Pancreas (tissue), 10 donors: ENCODE measurements at regions of chr14 and their contacts with region 1.

Region 1: GRCh38 chr14:51776102-51776894 is 84.1 kb upstream of the GNG2 start:
- DNase-seq: peak in 2 of 6 donors; percentile 28 to 29
- ATAC-seq: peak in 3 of 4 donors; percentile 76 to 80 (median 77)
- H3K4me3 ChIP-seq: no peak overlapping the region
- H3K27ac ChIP-seq: no peak overlapping the region
- H3K4me1 ChIP-seq: no peaks in the 10 kb centered on the region
- H3K27me3 ChIP-seq: peaks cover 0 to 5% (median 0%) of the 10 kb centered on the region in 4 donors
- CTCF ChIP-seq: peak in 3 of 4 donors; percentile 17 to 27 (median 21)

Region 2: DNA sequence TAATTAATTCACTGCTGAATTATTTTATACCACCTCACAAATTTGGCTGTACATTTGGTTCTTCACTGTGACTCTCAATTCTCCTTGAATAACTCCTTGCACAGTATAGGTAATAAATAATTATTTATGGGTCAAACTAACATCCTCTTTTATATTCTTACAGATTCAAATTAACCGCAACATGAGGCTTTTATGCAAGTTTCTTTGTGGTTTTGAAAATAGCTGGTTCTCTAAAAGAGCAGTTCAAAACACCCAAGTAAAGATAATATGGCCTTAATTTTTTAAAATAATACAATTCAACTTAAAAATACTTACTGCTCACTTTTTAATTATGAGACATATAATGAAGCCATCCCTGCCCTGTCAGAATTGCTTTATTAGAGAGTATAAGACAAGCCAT is 668.5 kb before region 1 on chr14:
- intact Hi-C with region 1: no loop called
- DNase-seq: no peak
- ATAC-seq: no peak
- H3K4me3 ChIP-seq: no peak overlapping the region
- H3K27ac ChIP-seq: no peak overlapping the region
- H3K4me1 ChIP-seq: no peaks in the 10 kb centered on the region
- H3K27me3 ChIP-seq: no peaks in the 10 kb centered on the region
- CTCF ChIP-seq: no peak

Region 3: DNA sequence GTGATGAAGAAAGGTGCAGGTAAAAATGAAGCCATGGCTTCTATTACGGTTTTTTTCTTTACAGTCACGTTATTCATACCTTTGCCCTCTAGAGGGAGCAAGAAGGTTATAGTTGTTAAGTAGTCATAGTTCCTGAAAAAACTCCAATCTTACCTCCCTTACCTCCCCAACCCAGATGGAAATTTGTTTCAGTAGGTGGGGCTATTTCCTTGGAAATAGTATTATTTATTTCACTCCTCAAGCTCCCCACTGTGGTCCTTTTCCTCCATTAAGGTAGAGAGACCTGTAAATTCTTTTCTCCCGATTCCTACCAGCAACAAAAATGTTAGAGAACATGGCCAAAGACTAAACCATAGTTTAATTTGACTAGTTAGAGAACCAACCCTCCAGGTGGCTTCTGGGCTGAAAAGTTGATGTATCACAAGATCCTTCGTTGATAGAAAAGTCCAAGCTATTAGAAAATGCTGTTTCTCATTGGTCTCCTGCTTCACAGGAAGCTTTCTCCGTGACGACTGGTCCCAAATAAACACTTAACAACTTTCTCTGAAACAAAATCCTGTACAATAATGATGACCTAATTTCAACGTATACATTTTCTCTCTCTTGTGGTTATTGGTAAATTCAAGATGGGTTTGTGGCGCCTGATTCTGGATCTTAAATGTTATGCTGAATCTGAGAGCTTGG is 492.8 kb before region 1 on chr14:
- intact Hi-C with region 1: loop called in 2 of 3 experiments (anchors 5 kb)
- DNase-seq: no peak
- ATAC-seq: peak; percentile 68 to 98 (median 94)
- H3K4me3 ChIP-seq: no peak overlapping the region
- H3K27ac ChIP-seq: no peak overlapping the region
- H3K4me1 ChIP-seq: no peaks in the 10 kb centered on the region
- H3K27me3 ChIP-seq: no peaks in the 10 kb centered on the region
- CTCF ChIP-seq: peak; percentile 38 to 77 (median 64)

Region 4: GRCh38 chr14:51369814-51370213 is 406.5 kb before region 1 on chr14:
- intact Hi-C with region 1: loop called in 1 of 3 experiments (anchors 10 kb)
- DNase-seq: peak in 1 of 6 donors; percentile 15
- ATAC-seq: peak in 3 of 4 donors; percentile 57 to 79 (median 65)
- H3K4me3 ChIP-seq: no peak overlapping the region
- H3K27ac ChIP-seq: no peak overlapping the region
- H3K4me1 ChIP-seq: no peaks in the 10 kb centered on the region
- H3K27me3 ChIP-seq: no peaks in the 10 kb centered on the region
- CTCF ChIP-seq: peak in 2 of 4 donors; percentile 25 to 42

Region 5: DNA sequence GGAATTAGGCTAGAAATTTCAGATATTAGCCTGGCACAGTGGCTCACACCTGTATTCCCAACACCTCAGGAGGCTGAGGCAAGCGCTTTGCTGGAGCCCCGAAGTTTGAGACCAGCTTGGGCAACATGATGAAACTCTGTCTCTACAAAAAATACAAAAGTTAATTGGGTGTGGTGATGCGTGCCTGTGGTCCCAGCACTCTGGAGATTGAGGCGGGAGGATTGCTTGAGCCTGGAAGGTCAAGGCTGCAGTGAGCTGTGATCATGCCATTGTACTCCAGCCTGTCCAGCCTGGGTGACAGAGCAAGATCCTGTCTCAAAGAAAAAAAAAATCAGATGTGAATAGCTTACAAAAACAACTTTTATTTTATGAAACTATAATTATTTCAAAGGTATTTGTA is 109.5 kb before region 1 on chr14:
- intact Hi-C with region 1: no loop called
- DNase-seq: no peak
- ATAC-seq: no peak
- H3K4me3 ChIP-seq: no peak overlapping the region
- H3K27ac ChIP-seq: no peak overlapping the region
- H3K4me1 ChIP-seq: no peaks in the 10 kb centered on the region
- H3K27me3 ChIP-seq: no peaks in the 10 kb centered on the region
- CTCF ChIP-seq: no peak

Region 6: GRCh38 chr14:52124791-52125661 is 348.7 kb after region 1 on chr14:
- intact Hi-C with region 1: no loop called
- DNase-seq: no peak
- ATAC-seq: peak in 2 of 4 donors; percentile 34 to 63
- H3K4me3 ChIP-seq: no peak overlapping the region
- H3K27ac ChIP-seq: no peak overlapping the region
- H3K4me1 ChIP-seq: no peaks in the 10 kb centered on the region
- H3K27me3 ChIP-seq: peaks cover 0 to 3% (median 0%) of the 10 kb centered on the region in 4 donors
- CTCF ChIP-seq: no peak